Natural killer cell (primary cell): ENCODE measurements at regions of chr10 and their contacts with region 1.

Region 1: DNA sequence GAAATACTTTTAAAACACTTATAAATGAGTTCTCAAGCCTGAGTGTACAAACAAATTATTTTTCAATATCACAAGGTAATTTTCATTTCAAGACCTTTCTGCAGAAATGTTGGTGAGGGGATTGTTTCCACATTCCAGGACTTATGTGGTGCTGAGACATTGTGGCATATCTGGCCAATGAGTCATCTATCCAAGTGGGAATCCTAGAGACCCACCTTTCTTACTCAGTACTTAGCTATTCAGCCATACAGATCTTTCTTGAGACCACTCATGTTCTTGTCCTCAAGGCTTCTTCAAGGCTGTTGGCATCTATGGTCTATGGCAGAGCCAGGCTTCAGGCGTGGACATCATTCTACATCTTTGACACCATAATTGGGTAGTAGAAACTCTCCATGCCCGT is 225.4 kb downstream of the DKK1 start:
- DNase-seq: no peak
- ATAC-seq: no peak
- H3K4me3 ChIP-seq: no peak overlapping the region
- H3K4me3 Mint-ChIP-seq: no peak overlapping the region
- H3K27ac ChIP-seq: no peak overlapping the region
- H3K27ac Mint-ChIP-seq: no peak overlapping the region
- H3K4me1 ChIP-seq: no peaks in the 10 kb centered on the region
- H3K4me1 Mint-ChIP-seq: no peaks in the 10 kb centered on the region
- H3K27me3 ChIP-seq: no peaks in the 10 kb centered on the region
- H3K27me3 Mint-ChIP-seq: no peaks in the 10 kb centered on the region
- CTCF ChIP-seq: no peak

Region 2: DNA sequence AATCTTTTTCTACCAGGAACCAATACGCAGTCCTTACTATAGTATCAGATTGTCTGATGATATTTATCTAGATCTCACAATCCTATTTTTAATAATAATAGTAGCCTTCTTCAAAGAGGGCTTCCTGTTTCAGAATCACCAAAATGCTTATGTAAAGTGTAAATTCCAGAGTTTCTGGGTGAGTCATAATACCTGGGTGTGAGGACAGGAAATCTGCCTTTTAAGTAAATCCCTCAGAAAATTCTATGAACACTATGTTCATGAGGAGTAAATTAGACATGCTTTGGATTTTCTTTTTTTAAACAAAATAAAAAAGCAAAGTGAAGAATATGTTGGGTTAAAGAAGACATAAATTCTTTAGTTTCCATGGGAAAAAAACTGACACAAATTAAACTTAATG is 204.9 kb before region 1 on chr10:
- intact Hi-C with region 1: no loop called
- DNase-seq: no peak
- ATAC-seq: no peak
- H3K4me3 ChIP-seq: no peak overlapping the region
- H3K4me3 Mint-ChIP-seq: no peak overlapping the region
- H3K27ac ChIP-seq: no peak overlapping the region
- H3K27ac Mint-ChIP-seq: no peak overlapping the region
- H3K4me1 ChIP-seq: no peaks in the 10 kb centered on the region
- H3K4me1 Mint-ChIP-seq: no peaks in the 10 kb centered on the region
- H3K27me3 ChIP-seq: no peaks in the 10 kb centered on the region
- H3K27me3 Mint-ChIP-seq: peaks cover 3 to 7% of the 10 kb centered on the region in 2 donors
- CTCF ChIP-seq: no peak

Region 3: GRCh38 chr10:52558090-52558489 is 18.6 kb after region 1 on chr10:
- intact Hi-C with region 1: loop called (anchors 1 kb)
- DNase-seq: no peak
- ATAC-seq: no peak
- H3K4me3 ChIP-seq: no peak overlapping the region
- H3K4me3 Mint-ChIP-seq: no peak overlapping the region
- H3K27ac ChIP-seq: no peak overlapping the region
- H3K27ac Mint-ChIP-seq: no peak overlapping the region
- H3K4me1 ChIP-seq: no peaks in the 10 kb centered on the region
- H3K4me1 Mint-ChIP-seq: no peaks in the 10 kb centered on the region
- H3K27me3 ChIP-seq: no peaks in the 10 kb centered on the region
- H3K27me3 Mint-ChIP-seq: no peaks in the 10 kb centered on the region
- CTCF ChIP-seq: no peak